SK-N-SH (cell line): ENCODE measurements at regions of chr12 and their contacts with region 1.

Region 1: GRCh38 chr12:53675651-53676453 is at the start of gene ATP5MC2:
- DNase-seq: peak; percentile 98
- H3K4me3 ChIP-seq: peak within 1 kb of the TSS; percentile 70 to 75
- H3K27ac ChIP-seq: peak within 1 kb of the TSS; percentile 44 to 91
- H3K4me1 ChIP-seq: peaks cover 0 to 8% of the 10 kb centered on the region in 2 experiments; a peak in 2 of 4 replicates
- H3K27me3 ChIP-seq: no peaks in the 10 kb centered on the region
- CTCF ChIP-seq: peak; percentile 98
- EP300 ChIP-seq: no peak
- RAD21 ChIP-seq: peak; percentile 81
- polyA plus RNA-seq, gene ATP5MC2: 309 and 319 TPM in 2 replicates

Region 2: GRCh38 chr12:53241623-53242412 is 434.0 kb before region 1 on chr12:
- CTCF ChIA-PET with region 1: no interaction called
- POLR2A ChIA-PET with region 1: no interaction called
- DNase-seq: no peak
- H3K4me3 ChIP-seq: no peak overlapping the region
- H3K27ac ChIP-seq: no peak overlapping the region
- H3K4me1 ChIP-seq: peaks cover 0 to 2% of the 10 kb centered on the region in 2 experiments; a peak in 1 of 4 replicates
- H3K27me3 ChIP-seq: peaks cover 4% of the 10 kb centered on the region; the same call in 1 of the 2 replicates
- CTCF ChIP-seq: no peak
- EP300 ChIP-seq: no peak
- RAD21 ChIP-seq: no peak

Region 3: GRCh38 chr12:53538196-53538689 is 137.6 kb before region 1 on chr12:
- CTCF ChIA-PET with region 1: interaction called, 120 read pairs
- POLR2A ChIA-PET with region 1: interaction called, 16 read pairs
- DNase-seq: no peak
- H3K4me3 ChIP-seq: no peak overlapping the region
- H3K27ac ChIP-seq: no peak overlapping the region
- H3K4me1 ChIP-seq: no peaks in the 10 kb centered on the region
- H3K27me3 ChIP-seq: no peaks in the 10 kb centered on the region
- CTCF ChIP-seq: no peak
- EP300 ChIP-seq: no peak
- RAD21 ChIP-seq: no peak

Region 4: DNA sequence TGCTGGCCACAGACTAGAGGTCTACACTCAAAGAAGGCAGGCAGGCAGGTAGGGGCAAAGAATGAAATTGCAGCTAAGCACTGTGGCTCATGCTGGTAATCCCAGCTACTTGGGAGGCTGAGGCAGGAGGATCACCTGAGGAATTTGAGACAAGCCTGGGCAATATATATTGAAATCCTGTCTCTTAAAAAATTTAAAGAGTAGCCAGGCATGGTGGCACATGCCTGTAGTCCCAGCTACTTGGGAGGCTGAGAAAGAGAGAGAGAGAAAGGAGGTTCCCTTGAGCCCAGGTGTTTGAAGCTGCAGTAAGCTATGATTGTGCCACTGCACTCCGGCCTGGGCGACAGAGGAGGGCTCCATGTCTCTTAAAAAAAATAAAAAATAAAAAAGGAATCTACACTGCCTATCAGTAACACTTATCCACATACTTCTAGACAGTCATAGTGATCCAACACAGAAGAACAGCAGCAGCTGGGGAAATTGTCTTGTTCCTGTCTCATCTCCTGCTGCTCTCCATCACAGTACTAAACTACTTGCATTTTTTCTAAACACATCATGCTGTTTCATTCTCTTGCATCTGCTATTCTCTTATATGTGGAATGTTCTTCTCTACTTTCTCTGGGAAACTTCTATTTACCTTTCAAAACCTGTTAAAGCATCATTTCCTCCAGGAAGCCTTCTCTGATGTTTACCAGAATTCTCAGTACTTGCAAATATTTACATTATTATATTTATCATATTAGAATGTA is 106.9 kb before region 1 on chr12:
- CTCF ChIA-PET with region 1: interaction called, 19 read pairs
- POLR2A ChIA-PET with region 1: no interaction called
- DNase-seq: no peak
- H3K4me3 ChIP-seq: no peak overlapping the region
- H3K27ac ChIP-seq: peak overlapping the region in 1 of 2 experiments; percentile 13; a peak in 1 of 4 replicates
- H3K4me1 ChIP-seq: peaks cover 0 to 4% of the 10 kb centered on the region in 2 experiments; a peak in 2 of 4 replicates
- H3K27me3 ChIP-seq: no peaks in the 10 kb centered on the region
- CTCF ChIP-seq: no peak
- EP300 ChIP-seq: no peak
- RAD21 ChIP-seq: no peak

Region 5: GRCh38 chr12:53596920-53597363 is 78.9 kb before region 1 on chr12:
- CTCF ChIA-PET with region 1: interaction called, 16 read pairs
- POLR2A ChIA-PET with region 1: interaction called, 6 read pairs
- DNase-seq: no peak
- H3K4me3 ChIP-seq: no peak overlapping the region
- H3K27ac ChIP-seq: peak overlapping the region in 1 of 2 experiments; percentile 59; a peak in 1 of 4 replicates
- H3K4me1 ChIP-seq: peaks cover 11 to 21% of the 10 kb centered on the region in 2 experiments
- H3K27me3 ChIP-seq: no peaks in the 10 kb centered on the region
- CTCF ChIP-seq: no peak
- EP300 ChIP-seq: no peak
- RAD21 ChIP-seq: no peak

Region 6: DNA sequence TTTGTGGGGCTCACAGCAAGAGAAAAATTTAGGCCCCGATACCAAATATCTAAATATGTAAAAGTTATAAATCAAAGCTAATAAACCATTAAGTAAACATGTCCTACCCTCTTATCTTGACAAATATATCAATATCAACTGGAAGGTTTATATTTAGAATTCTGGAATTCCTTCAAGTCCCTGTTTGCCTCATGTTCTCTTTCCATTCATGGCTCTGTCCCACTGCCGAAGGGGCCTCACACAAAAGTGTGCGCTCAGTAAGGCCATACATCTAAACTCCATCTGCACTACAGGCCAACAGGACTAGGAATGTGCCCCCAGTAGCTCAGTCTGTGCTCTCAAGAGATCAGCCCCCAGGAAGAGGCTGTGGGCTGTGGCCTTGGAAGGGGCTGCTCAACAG is 10.6 kb after region 1 on chr12:
- CTCF ChIA-PET with region 1: interaction called, 50 read pairs
- POLR2A ChIA-PET with region 1: no interaction called
- DNase-seq: no peak
- H3K4me3 ChIP-seq: no peak overlapping the region
- H3K27ac ChIP-seq: no peak overlapping the region
- H3K4me1 ChIP-seq: no peaks in the 10 kb centered on the region
- H3K27me3 ChIP-seq: peaks cover 14% of the 10 kb centered on the region; the same call in 1 of the 2 replicates
- CTCF ChIP-seq: no peak
- EP300 ChIP-seq: no peak
- RAD21 ChIP-seq: no peak

Region 7: DNA sequence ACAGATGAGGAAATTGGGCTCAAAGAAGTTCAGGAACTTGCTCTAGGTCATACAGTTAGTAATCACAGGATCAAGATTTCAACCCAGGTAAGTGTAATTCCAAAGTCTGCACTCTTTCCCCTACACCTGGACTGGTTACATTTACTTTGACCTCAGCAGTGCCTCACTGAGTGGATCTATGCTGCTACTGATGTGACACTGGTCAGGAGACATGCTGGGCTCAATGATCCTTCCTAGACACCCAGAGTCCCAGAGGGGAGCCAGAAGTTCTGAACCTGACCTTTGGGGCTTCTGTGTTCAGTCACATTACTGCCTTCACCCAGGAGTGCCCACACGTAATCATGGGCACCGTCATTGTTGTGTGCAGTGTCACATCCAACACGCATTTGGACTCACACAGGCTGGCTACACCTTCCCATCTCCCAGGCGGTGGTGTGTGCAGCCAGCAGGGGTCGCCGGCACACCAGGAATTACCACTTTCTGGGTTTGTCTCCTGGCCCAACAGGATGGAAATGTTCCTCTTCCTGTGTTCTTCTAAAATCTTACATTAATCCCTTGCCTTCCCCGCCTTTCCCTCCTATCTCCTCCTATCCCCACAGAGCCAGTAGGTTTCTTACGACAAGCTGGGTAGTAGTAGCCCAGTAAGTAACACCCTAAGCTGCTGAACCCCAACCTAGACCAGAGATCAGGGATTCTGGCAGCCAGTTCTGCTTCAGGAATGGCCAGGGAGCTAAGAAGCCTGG is 25.8 kb after region 1 on chr12:
- CTCF ChIA-PET with region 1: interaction called, 14 read pairs
- POLR2A ChIA-PET with region 1: no interaction called
- DNase-seq: peak; percentile 80
- H3K4me3 ChIP-seq: no peak overlapping the region; a peak in 1 of 4 replicates
- H3K27ac ChIP-seq: no peak overlapping the region
- H3K4me1 ChIP-seq: no peaks in the 10 kb centered on the region
- H3K27me3 ChIP-seq: peaks cover 79% of the 10 kb centered on the region
- CTCF ChIP-seq: peak; percentile 92
- EP300 ChIP-seq: no peak
- RAD21 ChIP-seq: peak; percentile 95